ENCODE measurements at regions of chr18 and their contacts with region 1.

Region 1: GRCh38 chr18:7566567-7567473 is at the start of gene PTPRM:
- DNase-seq: peak; percentile 88
- ATAC-seq: peak; percentile 77
- H3K4me3 ChIP-seq: peak within 1 kb of the TSS; percentile 95
- H3K27ac ChIP-seq: peak within 1 kb of the TSS; percentile 33
- H3K4me1 ChIP-seq: peaks cover 33% of the 10 kb centered on the region
- H3K27me3 ChIP-seq: no peaks in the 10 kb centered on the region
- CTCF ChIP-seq: no peak
- total RNA-seq, gene PTPRM: 45.6 and 61.3 TPM in 2 replicates

Region 2: GRCh38 chr18:7272311-7273049 is 294.3 kb before region 1 on chr18:
- CTCF ChIA-PET with region 1: interaction called, 13 read pairs
- POLR2A ChIA-PET with region 1: no interaction called
- intact Hi-C with region 1: loop called (anchors 1 kb)
- DNase-seq: peak; percentile 88
- ATAC-seq: peak; percentile 76
- H3K4me3 ChIP-seq: no peak overlapping the region
- H3K27ac ChIP-seq: no peak overlapping the region
- H3K4me1 ChIP-seq: peaks cover 18% of the 10 kb centered on the region
- H3K27me3 ChIP-seq: peaks cover 2% of the 10 kb centered on the region; the same call in 1 of the 2 replicates
- CTCF ChIP-seq: peak; percentile 69

Region 3: GRCh38 chr18:7492385-7492784 is 74.4 kb before region 1 on chr18:
- CTCF ChIA-PET with region 1: no interaction called
- POLR2A ChIA-PET with region 1: no interaction called
- intact Hi-C with region 1: no loop called
- DNase-seq: no peak
- ATAC-seq: no peak
- H3K4me3 ChIP-seq: no peak overlapping the region
- H3K27ac ChIP-seq: no peak overlapping the region
- H3K4me1 ChIP-seq: no peaks in the 10 kb centered on the region
- H3K27me3 ChIP-seq: peaks cover 35% of the 10 kb centered on the region
- CTCF ChIP-seq: no peak

Region 4: DNA sequence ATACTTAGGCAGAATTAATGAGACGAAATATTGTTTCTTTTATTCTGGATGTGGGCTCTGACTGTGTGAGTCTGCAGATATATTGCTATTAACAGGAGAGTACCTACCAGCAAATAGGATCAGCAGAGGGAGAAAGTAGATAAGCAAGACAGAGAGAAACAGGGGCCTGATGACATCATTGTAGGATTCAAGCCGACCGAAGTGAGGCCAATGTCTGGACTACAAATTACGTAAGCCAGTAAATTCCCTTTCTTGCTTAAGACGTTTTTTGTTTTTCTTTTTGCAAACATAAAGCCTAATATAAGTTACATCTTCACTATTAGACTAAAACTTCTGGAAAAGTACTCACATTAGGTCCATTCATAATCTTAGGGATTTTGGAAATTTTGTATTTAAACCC is 21.1 kb before region 1 on chr18:
- CTCF ChIA-PET with region 1: no interaction called
- POLR2A ChIA-PET with region 1: no interaction called
- intact Hi-C with region 1: no loop called
- DNase-seq: no peak
- ATAC-seq: no peak
- H3K4me3 ChIP-seq: no peak overlapping the region
- H3K27ac ChIP-seq: no peak overlapping the region
- H3K4me1 ChIP-seq: no peaks in the 10 kb centered on the region
- H3K27me3 ChIP-seq: no peaks in the 10 kb centered on the region
- CTCF ChIP-seq: no peak

Region 5: DNA sequence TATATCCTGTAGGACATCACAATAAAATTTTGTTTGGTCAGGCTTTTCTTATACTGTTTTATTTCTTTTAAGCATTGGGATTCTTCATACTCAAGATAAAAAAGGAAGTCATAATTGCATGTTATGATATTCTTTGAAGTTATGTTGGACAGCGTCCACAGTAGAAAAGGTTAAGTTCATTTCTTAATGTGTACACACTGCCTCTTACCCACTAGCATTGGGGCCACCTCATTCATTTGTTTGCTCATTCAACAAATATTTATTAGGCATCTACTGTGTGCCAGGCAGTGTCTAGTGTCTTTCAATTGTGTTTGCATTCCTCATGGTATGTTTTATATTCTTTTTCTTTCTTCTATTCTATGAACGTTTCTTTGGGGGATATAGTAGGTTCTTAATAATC is 70.4 kb after region 1 on chr18:
- CTCF ChIA-PET with region 1: interaction called, 4 read pairs
- POLR2A ChIA-PET with region 1: no interaction called
- intact Hi-C with region 1: loop called (anchors 2 kb)
- DNase-seq: peak; percentile 92
- ATAC-seq: peak; percentile 100
- H3K4me3 ChIP-seq: no peak overlapping the region
- H3K27ac ChIP-seq: peak overlapping the region; percentile 22
- H3K4me1 ChIP-seq: peaks cover 27% of the 10 kb centered on the region
- H3K27me3 ChIP-seq: no peaks in the 10 kb centered on the region
- CTCF ChIP-seq: no peak

Region 6: GRCh38 chr18:7658712-7659111 is 91.9 kb after region 1 on chr18:
- CTCF ChIA-PET with region 1: no interaction called
- POLR2A ChIA-PET with region 1: no interaction called
- intact Hi-C with region 1: no loop called
- DNase-seq: no peak
- ATAC-seq: no peak
- H3K4me3 ChIP-seq: no peak overlapping the region
- H3K27ac ChIP-seq: no peak overlapping the region
- H3K4me1 ChIP-seq: no peaks in the 10 kb centered on the region
- H3K27me3 ChIP-seq: no peaks in the 10 kb centered on the region
- CTCF ChIP-seq: no peak

Region 7: GRCh38 chr18:7722950-7723349 is 156.1 kb after region 1 on chr18:
- CTCF ChIA-PET with region 1: no interaction called
- POLR2A ChIA-PET with region 1: no interaction called
- intact Hi-C with region 1: no loop called
- DNase-seq: no peak
- ATAC-seq: no peak
- H3K4me3 ChIP-seq: no peak overlapping the region
- H3K27ac ChIP-seq: no peak overlapping the region
- H3K4me1 ChIP-seq: no peaks in the 10 kb centered on the region
- H3K27me3 ChIP-seq: no peaks in the 10 kb centered on the region
- CTCF ChIP-seq: no peak

Region 8: DNA sequence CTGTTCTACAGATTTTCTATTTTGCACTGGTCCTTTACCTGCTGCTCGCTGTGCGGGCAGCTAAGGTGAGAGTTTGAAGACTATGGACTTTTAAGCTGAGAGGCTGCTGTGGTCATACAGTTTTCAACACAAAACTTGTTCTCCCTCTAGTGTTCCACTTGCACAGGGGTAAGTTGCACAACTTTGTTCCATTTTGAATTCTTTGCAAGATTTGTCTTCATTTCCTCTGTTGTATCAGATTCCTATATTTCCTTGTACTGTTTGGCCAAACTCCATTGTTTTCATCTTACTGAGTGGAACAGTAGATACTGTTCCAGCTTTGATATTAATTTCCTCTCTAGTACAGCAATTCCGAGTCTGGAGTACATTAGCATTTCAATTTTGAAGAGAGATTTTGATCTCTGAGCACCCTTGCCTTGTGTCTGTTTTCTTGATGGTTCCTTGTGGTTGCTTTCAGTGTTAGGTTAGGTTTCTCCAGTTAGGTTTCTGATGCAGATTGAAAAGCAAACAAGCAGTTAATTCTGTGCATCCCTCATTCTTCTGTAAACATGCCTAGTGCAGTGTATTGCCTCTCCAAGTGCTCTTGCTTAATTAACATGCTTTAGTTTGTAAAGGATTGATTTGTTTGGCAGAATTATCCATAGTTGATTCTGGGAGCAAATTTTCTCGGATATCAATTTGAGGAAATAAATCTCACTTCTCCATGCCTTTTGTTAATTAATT is 189.1 kb after region 1 on chr18:
- CTCF ChIA-PET with region 1: interaction called, 3 read pairs
- POLR2A ChIA-PET with region 1: no interaction called
- intact Hi-C with region 1: loop called (anchors 5 kb)
- DNase-seq: no peak
- ATAC-seq: peak; percentile 30; the same call in 1 of the 2 replicates
- H3K4me3 ChIP-seq: no peak overlapping the region
- H3K27ac ChIP-seq: no peak overlapping the region
- H3K4me1 ChIP-seq: peaks cover 15% of the 10 kb centered on the region
- H3K27me3 ChIP-seq: no peaks in the 10 kb centered on the region
- CTCF ChIP-seq: peak; percentile 31; the same call in 1 of the 2 replicates

Region 9: DNA sequence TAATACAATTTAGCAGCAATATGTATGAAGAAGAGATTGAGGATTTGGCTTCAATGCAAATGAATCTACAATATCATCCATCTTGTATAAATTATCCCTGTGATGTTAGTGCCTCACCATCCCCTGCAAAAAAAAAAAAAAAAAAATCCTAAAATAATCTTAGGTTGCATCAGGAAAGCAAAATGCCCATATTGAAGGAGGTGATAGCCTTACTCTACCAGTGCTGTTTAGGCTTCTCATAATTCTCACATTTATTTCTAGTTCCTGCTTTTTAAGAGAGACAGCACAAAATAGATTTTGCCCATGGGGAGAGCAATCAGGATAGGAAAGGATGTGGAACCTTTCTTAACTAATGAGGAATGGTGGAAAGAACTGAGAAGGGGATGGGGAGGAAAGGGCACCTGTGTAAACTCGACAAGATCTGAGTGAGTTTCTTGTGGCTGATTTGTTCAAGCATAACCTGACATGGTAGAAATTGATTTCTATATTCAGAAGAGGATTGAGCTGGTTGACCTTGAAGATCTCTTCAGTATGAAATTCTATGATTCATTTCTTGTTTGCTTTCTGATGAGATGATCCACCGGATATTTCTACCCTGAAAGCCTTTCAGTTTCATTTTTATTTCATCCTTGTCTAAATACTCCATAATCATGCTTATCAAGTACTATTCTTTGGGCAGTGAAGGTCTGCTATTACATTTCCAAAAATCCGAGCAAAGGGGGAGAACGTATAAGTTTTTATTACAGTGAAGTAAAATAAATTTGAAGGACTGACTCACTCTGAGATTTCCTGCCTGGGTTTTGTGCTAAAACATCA is 391.5 kb after region 1 on chr18:
- CTCF ChIA-PET with region 1: no interaction called
- POLR2A ChIA-PET with region 1: no interaction called
- intact Hi-C with region 1: loop called (anchors 2 kb)
- DNase-seq: peak; percentile 74
- ATAC-seq: peak; percentile 82
- H3K4me3 ChIP-seq: peak overlapping the region; percentile 59
- H3K27ac ChIP-seq: peak overlapping the region; percentile 83
- H3K4me1 ChIP-seq: peaks cover 31% of the 10 kb centered on the region
- H3K27me3 ChIP-seq: no peaks in the 10 kb centered on the region
- CTCF ChIP-seq: no peak